ENCODE measurements at regions of chr4 and their contacts with region 1.

Region 1: DNA sequence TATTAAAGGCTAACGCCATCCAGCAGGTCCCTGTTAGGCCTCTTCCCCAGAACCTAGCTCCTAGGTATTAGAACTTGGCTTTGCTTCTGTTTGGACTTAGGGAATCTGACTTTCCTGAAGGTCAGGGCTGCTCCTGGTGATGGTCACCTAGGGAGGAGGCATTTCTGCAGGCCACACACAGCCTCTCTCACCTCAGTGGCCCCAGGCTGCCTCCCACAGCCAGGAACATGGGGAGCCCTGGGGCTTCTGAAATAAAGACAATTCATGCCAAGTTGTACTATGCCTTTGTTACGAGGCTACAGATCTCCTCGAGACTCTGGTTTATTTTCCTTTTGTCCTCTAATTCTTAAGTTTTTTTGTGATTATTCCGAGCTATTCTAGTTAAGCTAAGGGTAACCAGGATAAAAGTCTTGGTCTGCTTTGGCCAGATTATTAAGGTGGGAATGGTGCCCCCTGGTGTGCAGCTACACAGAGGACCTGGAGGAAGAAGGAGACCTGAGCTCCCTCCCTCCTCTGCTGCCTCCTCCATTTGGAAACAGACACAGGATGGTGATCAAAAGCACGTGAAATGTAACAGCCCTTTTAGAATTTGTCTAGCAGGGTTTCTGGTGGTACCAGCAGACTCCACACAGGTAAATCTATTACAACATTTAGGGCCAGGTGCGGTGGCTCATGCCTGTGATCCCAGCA is 131.0 kb downstream of the DCLK2 start:
- DNase-seq: no peak
- ATAC-seq: peak; percentile 82
- H3K4me3 ChIP-seq: no peak overlapping the region
- H3K27ac ChIP-seq: no peak overlapping the region
- H3K4me1 ChIP-seq: peaks cover 2% of the 10 kb centered on the region; the same call in 1 of the 2 replicates
- H3K27me3 ChIP-seq: no peaks in the 10 kb centered on the region
- CTCF ChIP-seq: peak; percentile 63

Region 2: GRCh38 chr4:149987330-149988086 is 221.8 kb before region 1 on chr4:
- CTCF ChIA-PET with region 1: no interaction called
- POLR2A ChIA-PET with region 1: no interaction called
- in situ Hi-C with region 1: no loop called
- intact Hi-C with region 1: no loop called
- DNase-seq: no peak
- ATAC-seq: no peak
- H3K4me3 ChIP-seq: no peak overlapping the region
- H3K27ac ChIP-seq: no peak overlapping the region; the same call in 1 of the 2 replicates
- H3K4me1 ChIP-seq: 0 out of 2 replicates have a peak, but pooled peaks cover 3% of the 10 kb centered on the region
- H3K27me3 ChIP-seq: no peaks in the 10 kb centered on the region
- CTCF ChIP-seq: no peak

Region 3: GRCh38 chr4:150108691-150109090 is 100.6 kb before region 1 on chr4:
- CTCF ChIA-PET with region 1: no interaction called
- POLR2A ChIA-PET with region 1: no interaction called
- in situ Hi-C with region 1: no loop called
- intact Hi-C with region 1: loop called (anchors 10 kb)
- DNase-seq: no peak
- ATAC-seq: no peak
- H3K4me3 ChIP-seq: no peak overlapping the region
- H3K27ac ChIP-seq: peak overlapping the region; percentile 44; the same call in 1 of the 2 replicates
- H3K4me1 ChIP-seq: peaks cover 13% of the 10 kb centered on the region
- H3K27me3 ChIP-seq: no peaks in the 10 kb centered on the region
- CTCF ChIP-seq: no peak